ENCODE measurements at regions of chr17 and their contacts with region 1.

Region 1: GRCh38 chr17:63827002-63827771 is at the starts of genes FTSJ3 and PSMC5:
- DNase-seq: peak; percentile 98
- ATAC-seq: peak; percentile 95
- H3K4me3 ChIP-seq: peak within 1 kb of the TSS; percentile 78 to 92 (median 81)
- H3K4me3 Mint-ChIP-seq: peak within 1 kb of the TSS; percentile 98
- H3K27ac ChIP-seq: peak within 1 kb of the TSS; percentile 70 to 92
- H3K27ac Mint-ChIP-seq: peak within 1 kb of the TSS; percentile 98
- H3K4me1 ChIP-seq: peaks cover 38 to 53% of the 10 kb centered on the region in 2 donors
- H3K4me1 Mint-ChIP-seq: peaks cover 73% of the 10 kb centered on the region
- H3K27me3 ChIP-seq: no peaks in the 10 kb centered on the region
- H3K27me3 Mint-ChIP-seq: no peaks in the 10 kb centered on the region
- CTCF ChIP-seq: peak; percentile 72
- total RNA-seq, gene FTSJ3: 75.9 and 78.2 TPM in 2 replicates
- total RNA-seq, gene PSMC5: 84.7 and 87.1 TPM in 2 replicates

Region 2: DNA sequence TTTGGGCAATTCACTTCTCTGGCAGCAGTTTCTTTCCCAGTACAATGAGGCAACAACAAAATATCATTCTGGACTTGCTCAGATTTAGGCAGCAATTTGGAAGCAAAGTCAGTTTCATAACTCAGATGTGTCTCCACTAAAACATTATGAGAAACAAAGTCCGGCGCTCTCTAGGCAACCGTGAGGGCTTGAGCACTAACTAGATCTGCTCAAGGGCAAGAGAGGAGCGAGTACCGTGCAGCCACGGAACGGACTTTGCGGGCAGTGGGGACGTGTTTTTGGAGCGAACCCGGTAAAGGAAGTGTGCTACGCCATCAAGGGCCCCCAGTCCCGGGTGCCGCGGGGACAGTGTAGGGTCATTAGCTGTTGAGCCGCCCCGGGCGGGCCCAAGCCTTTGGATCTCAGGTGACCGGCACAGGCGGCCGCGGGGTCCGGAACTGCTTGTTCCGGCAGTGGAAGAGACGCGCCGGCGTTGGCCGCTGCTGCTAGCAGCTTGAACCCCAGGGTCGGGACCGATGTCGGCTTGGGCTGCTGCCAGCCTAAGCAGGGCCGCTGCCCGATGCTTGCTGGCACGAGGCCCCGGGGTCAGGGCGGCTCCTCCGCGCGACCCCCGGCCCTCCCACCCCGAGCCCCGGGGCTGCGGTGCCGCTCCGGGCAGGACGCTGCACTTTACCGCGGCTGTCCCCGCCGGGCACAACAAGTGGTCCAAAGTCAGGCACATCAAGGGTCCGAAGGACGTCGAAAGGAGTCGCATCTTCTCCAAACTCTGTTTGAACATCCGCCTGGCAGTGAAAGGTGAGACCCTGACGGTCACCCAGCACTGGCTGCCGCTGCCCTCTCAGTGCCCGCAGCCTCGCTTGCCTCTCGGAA is 226.4 kb before region 1 on chr17 and contains the start of gene TACO1:
- CTCF ChIA-PET with region 1: no interaction called
- POLR2A ChIA-PET with region 1: no interaction called
- intact Hi-C with region 1: loop called (anchors 1 kb)
- DNase-seq: peak; percentile 87
- ATAC-seq: peak; percentile 97
- H3K4me3 ChIP-seq: peak within 1 kb of the TSS; percentile 67 to 97 (median 91)
- H3K4me3 Mint-ChIP-seq: peak within 1 kb of the TSS; percentile 95
- H3K27ac ChIP-seq: peak within 1 kb of the TSS; percentile 39 to 88
- H3K27ac Mint-ChIP-seq: peak within 1 kb of the TSS; percentile 93
- H3K4me1 ChIP-seq: peaks cover 15 to 19% of the 10 kb centered on the region in 2 donors
- H3K4me1 Mint-ChIP-seq: peaks cover 21% of the 10 kb centered on the region
- H3K27me3 ChIP-seq: no peaks in the 10 kb centered on the region
- H3K27me3 Mint-ChIP-seq: no peaks in the 10 kb centered on the region
- CTCF ChIP-seq: no peak
- total RNA-seq, gene TACO1: 15.9 and 17.2 TPM in 2 replicates

Region 3: DNA sequence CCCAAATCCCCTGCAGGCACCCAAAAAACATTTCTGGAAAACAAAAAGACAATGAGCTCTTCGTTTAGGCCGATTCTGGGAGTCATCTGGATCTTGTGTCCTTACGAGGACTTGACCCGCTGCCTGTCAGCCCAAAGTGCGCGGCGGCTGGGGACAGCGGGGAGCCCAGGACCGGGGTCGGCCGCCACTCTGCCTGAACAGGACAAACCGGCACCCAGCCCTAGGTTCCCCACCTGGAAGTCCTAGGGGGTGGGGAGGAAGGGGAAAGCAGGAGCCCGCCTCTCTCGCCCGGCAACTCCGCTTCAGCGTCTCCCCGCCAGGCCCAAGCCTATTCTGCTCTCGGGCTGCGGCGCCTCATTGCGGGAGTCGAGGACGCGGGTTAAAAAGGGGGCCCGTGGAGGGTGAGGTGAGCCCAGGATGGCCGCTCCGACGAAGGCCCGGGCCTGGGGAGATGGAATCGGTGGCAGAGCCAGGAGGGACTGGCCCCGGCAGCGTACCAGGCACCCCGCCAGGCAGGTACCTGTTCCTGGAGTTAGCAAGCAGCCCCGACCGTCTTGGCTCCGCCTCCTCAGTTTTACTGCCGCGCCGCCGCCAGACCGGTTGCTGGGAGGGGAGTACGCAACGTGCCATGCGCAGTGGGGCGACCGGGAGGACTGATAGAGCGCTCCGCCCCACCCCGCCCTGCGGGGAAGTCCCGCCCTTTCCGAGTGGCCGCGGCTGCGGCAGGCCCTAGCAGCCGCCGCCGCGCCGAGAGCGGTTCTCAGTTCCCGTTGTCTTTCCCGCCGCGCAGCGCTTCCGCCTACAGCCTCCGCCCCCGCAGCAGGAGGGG is 85.8 kb before region 1 on chr17 and contains the start of gene STRADA:
- CTCF ChIA-PET with region 1: no interaction called
- POLR2A ChIA-PET with region 1: no interaction called
- intact Hi-C with region 1: loop called (anchors 1 kb)
- DNase-seq: peak; percentile 99
- ATAC-seq: peak; percentile 89
- H3K4me3 ChIP-seq: peak within 1 kb of the TSS; percentile 85 to 99 (median 93)
- H3K4me3 Mint-ChIP-seq: peak within 1 kb of the TSS; percentile 89
- H3K27ac ChIP-seq: peak within 1 kb of the TSS; percentile 97
- H3K27ac Mint-ChIP-seq: peak within 1 kb of the TSS; percentile 93
- H3K4me1 ChIP-seq: peaks cover 15 to 28% of the 10 kb centered on the region in 2 donors
- H3K4me1 Mint-ChIP-seq: peaks cover 28% of the 10 kb centered on the region
- H3K27me3 ChIP-seq: no peaks in the 10 kb centered on the region
- H3K27me3 Mint-ChIP-seq: no peaks in the 10 kb centered on the region
- CTCF ChIP-seq: no peak
- total RNA-seq, gene STRADA: 87.4 and 93.2 TPM in 2 replicates

Region 4: DNA sequence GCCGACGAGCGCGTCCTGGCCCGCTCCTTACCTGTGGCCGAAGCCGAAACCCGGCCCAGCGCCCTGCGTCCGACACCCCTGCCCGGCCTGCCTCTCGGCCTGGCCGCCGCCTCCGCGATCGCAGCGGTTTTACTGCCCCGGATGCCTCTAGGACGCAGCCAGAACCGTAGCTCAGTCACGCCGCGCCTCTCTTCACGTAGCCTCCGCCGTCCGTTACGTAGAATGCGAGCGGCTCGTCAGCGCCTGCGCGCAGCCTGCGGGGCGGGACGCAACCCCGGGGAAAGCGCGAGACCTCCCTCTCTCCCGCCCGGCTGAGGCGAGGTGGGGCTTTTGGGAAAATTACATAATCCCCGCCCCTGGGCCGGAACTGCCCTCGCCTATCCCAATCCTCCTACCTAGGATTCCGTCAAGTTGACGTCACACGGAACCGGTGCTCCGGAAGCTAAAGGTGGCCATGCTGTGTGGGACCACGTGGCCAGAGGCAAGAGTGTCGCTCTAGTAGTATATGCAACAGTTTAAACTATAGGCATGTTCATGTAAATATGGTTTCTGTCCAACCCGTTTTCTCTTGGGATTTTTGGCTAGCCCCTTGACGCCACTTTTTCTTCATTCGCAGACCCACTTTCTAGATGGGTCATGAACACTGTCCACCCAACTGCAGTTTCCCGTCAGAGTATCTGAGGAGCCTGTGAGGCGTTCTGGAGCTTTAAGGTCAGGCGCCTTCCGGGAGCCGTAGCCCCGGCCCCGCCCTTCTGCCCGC is 53.6 kb before region 1 on chr17 and contains the start of gene CCDC47:
- CTCF ChIA-PET with region 1: interaction called, 3 read pairs
- POLR2A ChIA-PET with region 1: interaction called, 15 read pairs
- intact Hi-C with region 1: loop called (anchors 1 kb)
- DNase-seq: peak; percentile 99
- ATAC-seq: peak; percentile 78
- H3K4me3 ChIP-seq: peak within 1 kb of the TSS; percentile 78 to 99 (median 90)
- H3K4me3 Mint-ChIP-seq: peak within 1 kb of the TSS; percentile 98
- H3K27ac ChIP-seq: peak within 1 kb of the TSS; percentile 78 to 94
- H3K27ac Mint-ChIP-seq: peak within 1 kb of the TSS; percentile 99
- H3K4me1 ChIP-seq: peaks cover 28 to 34% of the 10 kb centered on the region in 2 donors
- H3K4me1 Mint-ChIP-seq: peaks cover 51% of the 10 kb centered on the region
- H3K27me3 ChIP-seq: no peaks in the 10 kb centered on the region
- H3K27me3 Mint-ChIP-seq: no peaks in the 10 kb centered on the region
- CTCF ChIP-seq: no peak
- total RNA-seq, gene CCDC47: 36.2 and 39.7 TPM in 2 replicates

Region 5: GRCh38 chr17:63842540-63843386 is 15.6 kb after region 1 on chr17 and contains the start of gene SMARCD2:
- CTCF ChIA-PET with region 1: interaction called, 15 read pairs
- POLR2A ChIA-PET with region 1: interaction called, 23 read pairs
- intact Hi-C with region 1: loop called (anchors 1 kb)
- DNase-seq: peak; percentile 99
- ATAC-seq: peak; percentile 93
- H3K4me3 ChIP-seq: peak within 1 kb of the TSS; percentile 65 to 92 (median 89)
- H3K4me3 Mint-ChIP-seq: peak within 1 kb of the TSS; percentile 94
- H3K27ac ChIP-seq: peak within 1 kb of the TSS; percentile 90 to 92
- H3K27ac Mint-ChIP-seq: peak within 1 kb of the TSS; percentile 94
- H3K4me1 ChIP-seq: peaks cover 35 to 51% of the 10 kb centered on the region in 2 donors
- H3K4me1 Mint-ChIP-seq: peaks cover 43% of the 10 kb centered on the region
- H3K27me3 ChIP-seq: no peaks in the 10 kb centered on the region
- H3K27me3 Mint-ChIP-seq: no peaks in the 10 kb centered on the region
- CTCF ChIP-seq: no peak
- total RNA-seq, gene SMARCD2: 124 and 125 TPM in 2 replicates

Region 6: GRCh38 chr17:63848834-63849700 is 21.9 kb after region 1 on chr17:
- CTCF ChIA-PET with region 1: interaction called, 15 read pairs
- POLR2A ChIA-PET with region 1: interaction called, 23 read pairs
- intact Hi-C with region 1: no loop called
- DNase-seq: peak; percentile 97
- ATAC-seq: peak; percentile 96
- H3K4me3 ChIP-seq: peak overlapping the region; percentile 32 to 60 (median 53)
- H3K4me3 Mint-ChIP-seq: peak overlapping the region; percentile 88
- H3K27ac ChIP-seq: peak overlapping the region; percentile 65 to 84
- H3K27ac Mint-ChIP-seq: peak overlapping the region; percentile 91
- H3K4me1 ChIP-seq: peaks cover 7 to 19% of the 10 kb centered on the region in 2 donors
- H3K4me1 Mint-ChIP-seq: peaks cover 21% of the 10 kb centered on the region
- H3K27me3 ChIP-seq: no peaks in the 10 kb centered on the region
- H3K27me3 Mint-ChIP-seq: no peaks in the 10 kb centered on the region
- CTCF ChIP-seq: peak; percentile 84

Region 7: GRCh38 chr17:64081802-64082799 is 254.9 kb after region 1 on chr17:
- CTCF ChIA-PET with region 1: no interaction called
- POLR2A ChIA-PET with region 1: no interaction called
- intact Hi-C with region 1: no loop called
- DNase-seq: no peak
- ATAC-seq: no peak
- H3K4me3 ChIP-seq: no peak overlapping the region
- H3K4me3 Mint-ChIP-seq: no peak overlapping the region
- H3K27ac ChIP-seq: no peak overlapping the region
- H3K27ac Mint-ChIP-seq: no peak overlapping the region
- H3K4me1 ChIP-seq: peaks cover 3 to 7% of the 10 kb centered on the region in 2 donors
- H3K4me1 Mint-ChIP-seq: peaks cover 5% of the 10 kb centered on the region
- H3K27me3 ChIP-seq: no peaks in the 10 kb centered on the region
- H3K27me3 Mint-ChIP-seq: no peaks in the 10 kb centered on the region
- CTCF ChIP-seq: no peak

Region 8: GRCh38 chr17:64117981-64118979 is 291.1 kb after region 1 on chr17:
- CTCF ChIA-PET with region 1: no interaction called
- POLR2A ChIA-PET with region 1: no interaction called
- intact Hi-C with region 1: no loop called
- DNase-seq: no peak
- ATAC-seq: no peak
- H3K4me3 ChIP-seq: no peak overlapping the region
- H3K4me3 Mint-ChIP-seq: no peak overlapping the region
- H3K27ac ChIP-seq: no peak overlapping the region
- H3K27ac Mint-ChIP-seq: no peak overlapping the region
- H3K4me1 ChIP-seq: peaks cover 10 to 18% of the 10 kb centered on the region in 2 donors
- H3K4me1 Mint-ChIP-seq: peaks cover 14% of the 10 kb centered on the region
- H3K27me3 ChIP-seq: no peaks in the 10 kb centered on the region
- H3K27me3 Mint-ChIP-seq: no peaks in the 10 kb centered on the region
- CTCF ChIP-seq: no peak

Measured in B cell (primary cell).